AG04450 (cell line): ENCODE measurements at regions of chr6 and their contacts with region 1.

Region 1: DNA sequence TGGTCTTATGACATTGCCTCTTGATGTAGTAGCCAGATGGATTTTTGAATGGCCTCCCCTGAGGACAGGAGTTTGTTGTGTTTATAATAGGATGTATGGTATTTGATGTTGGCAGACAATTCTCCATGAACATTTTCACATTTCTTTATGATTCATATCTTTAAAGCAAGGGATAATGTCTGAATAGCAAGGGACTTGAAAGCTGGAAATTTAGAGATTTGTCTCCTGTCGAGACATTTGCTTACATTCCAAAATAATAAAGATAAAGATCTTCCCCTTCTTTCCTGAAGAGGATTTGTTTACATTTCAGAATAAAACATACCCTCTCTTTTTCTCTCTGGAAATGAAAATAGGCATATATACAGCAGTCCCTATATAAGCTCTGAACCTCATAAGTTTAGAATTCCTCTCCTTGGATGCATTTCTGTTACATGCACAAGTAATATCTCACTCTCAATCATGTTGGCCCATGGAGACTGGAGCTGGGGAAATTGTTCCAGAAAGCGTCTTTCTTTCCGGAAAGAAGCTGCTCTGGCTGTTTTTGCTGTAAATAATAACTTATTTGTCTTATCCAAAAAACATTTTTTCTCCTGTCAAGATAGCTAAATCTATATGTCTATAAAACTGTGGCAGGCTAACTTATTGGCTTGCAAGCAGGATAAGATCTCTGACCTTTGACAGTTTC is 42.5 kb upstream of the ASCC3 start:
- DNase-seq: no peak
- H3K4me3 ChIP-seq: no peak overlapping the region
- H3K27ac ChIP-seq: no peak overlapping the region
- H3K27me3 ChIP-seq: no peaks in the 10 kb centered on the region
- CTCF ChIP-seq: no peak

Region 2: DNA sequence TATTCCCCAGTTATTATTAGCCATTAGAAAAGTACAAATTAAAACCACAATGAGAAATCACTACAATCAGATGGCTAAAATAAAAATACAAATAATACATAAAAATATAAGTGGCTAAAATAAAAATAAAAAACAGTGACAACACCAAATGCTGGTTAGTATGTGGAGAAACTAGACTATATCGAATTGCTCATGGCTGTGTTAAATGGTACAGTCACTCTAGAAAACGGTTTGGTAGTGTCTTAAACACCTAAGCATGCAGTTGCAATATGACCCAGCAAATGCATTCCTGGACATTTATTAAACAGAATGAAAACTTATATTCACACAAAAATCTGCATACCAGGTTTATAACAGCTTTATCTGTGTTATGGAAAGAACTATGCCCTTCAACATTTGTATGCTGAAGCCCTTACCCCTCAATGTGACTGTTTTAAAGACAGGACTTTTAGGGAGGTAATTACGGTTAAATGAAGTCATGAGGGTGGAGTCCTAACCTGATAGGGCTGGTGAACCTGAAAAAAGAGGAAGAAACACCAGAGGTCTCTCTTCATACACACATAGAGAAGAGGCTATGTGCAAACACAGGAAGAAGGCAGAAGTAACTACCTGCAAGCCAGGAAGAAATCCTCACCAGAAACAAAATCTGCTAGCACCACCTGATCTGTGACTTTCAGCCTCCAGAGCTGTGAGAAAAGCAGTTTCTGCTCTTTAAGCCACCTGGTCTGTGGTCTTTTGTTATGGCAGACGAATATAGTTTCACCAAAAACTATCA is 127.4 kb before region 1 on chr6:
- CTCF ChIA-PET with region 1: no interaction called
- POLR2A ChIA-PET with region 1: no interaction called
- DNase-seq: no peak
- H3K4me3 ChIP-seq: no peak overlapping the region
- H3K27ac ChIP-seq: no peak overlapping the region
- H3K27me3 ChIP-seq: no peaks in the 10 kb centered on the region
- CTCF ChIP-seq: no peak

Region 3: GRCh38 chr6:100862063-100862462 is 61.6 kb before region 1 on chr6:
- CTCF ChIA-PET with region 1: no interaction called
- POLR2A ChIA-PET with region 1: no interaction called
- DNase-seq: no peak
- H3K4me3 ChIP-seq: no peak overlapping the region
- H3K27ac ChIP-seq: no peak overlapping the region
- H3K27me3 ChIP-seq: no peaks in the 10 kb centered on the region
- CTCF ChIP-seq: no peak

Region 4: GRCh38 chr6:100904316-100904715 is 19.3 kb before region 1 on chr6:
- CTCF ChIA-PET with region 1: interaction called, 12 read pairs
- POLR2A ChIA-PET with region 1: no interaction called
- DNase-seq: no peak
- H3K4me3 ChIP-seq: no peak overlapping the region
- H3K27ac ChIP-seq: no peak overlapping the region
- H3K27me3 ChIP-seq: no peaks in the 10 kb centered on the region
- CTCF ChIP-seq: no peak